OCI-LY7 (cell line): ENCODE measurements at regions of chr3 and their contacts with region 1.

Region 1: DNA sequence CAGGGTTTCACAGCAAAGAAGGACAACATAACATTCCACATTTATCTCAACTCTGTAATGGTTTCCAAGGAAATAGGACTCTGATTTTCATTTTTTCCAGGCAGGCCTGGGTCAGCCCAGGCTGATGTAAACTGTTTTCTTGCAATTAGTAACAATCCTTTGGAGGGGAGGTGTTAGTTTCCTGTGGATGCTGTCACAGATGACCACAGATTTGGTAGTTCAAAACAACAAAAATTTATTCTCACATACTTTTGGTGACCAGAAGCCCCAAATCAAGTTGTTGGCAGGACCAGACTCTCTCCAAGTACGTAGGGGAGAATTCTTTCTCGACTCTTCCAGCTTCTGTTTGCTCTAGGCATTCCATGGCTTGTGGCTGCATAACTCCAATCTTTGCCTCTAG is 88.0 kb downstream of the EDEM1 start:
- DNase-seq: no peak
- H3K4me3 ChIP-seq: no peak overlapping the region
- H3K27ac ChIP-seq: no peak overlapping the region
- H3K4me1 ChIP-seq: no peaks in the 10 kb centered on the region
- CTCF ChIP-seq: no peak

Region 2: DNA sequence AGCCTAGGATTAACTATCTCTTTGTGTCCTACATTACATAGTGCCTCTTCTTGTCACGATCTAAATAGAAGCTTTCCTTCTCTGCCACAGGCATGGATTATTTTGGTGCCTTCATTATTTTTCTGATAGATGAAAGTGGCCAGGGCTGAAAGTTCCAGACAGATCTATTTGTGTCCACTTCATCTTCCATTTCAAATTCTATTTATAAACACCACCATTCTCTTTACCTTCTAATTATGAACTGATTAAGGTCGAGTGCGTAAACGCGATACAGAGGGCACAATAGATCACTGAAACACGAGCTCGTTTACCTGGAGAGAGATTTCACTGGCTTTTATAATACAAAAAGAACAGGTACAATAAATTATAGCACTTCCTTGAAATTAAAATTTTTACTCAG is 17.0 kb after region 1 on chr3:
- CTCF ChIA-PET with region 1: interaction called, 4 read pairs
- POLR2A ChIA-PET with region 1: interaction called, 12 read pairs
- intact Hi-C with region 1: no loop called
- DNase-seq: no peak
- H3K4me3 ChIP-seq: no peak overlapping the region
- H3K27ac ChIP-seq: no peak overlapping the region
- H3K4me1 ChIP-seq: no peaks in the 10 kb centered on the region
- CTCF ChIP-seq: no peak

Region 3: DNA sequence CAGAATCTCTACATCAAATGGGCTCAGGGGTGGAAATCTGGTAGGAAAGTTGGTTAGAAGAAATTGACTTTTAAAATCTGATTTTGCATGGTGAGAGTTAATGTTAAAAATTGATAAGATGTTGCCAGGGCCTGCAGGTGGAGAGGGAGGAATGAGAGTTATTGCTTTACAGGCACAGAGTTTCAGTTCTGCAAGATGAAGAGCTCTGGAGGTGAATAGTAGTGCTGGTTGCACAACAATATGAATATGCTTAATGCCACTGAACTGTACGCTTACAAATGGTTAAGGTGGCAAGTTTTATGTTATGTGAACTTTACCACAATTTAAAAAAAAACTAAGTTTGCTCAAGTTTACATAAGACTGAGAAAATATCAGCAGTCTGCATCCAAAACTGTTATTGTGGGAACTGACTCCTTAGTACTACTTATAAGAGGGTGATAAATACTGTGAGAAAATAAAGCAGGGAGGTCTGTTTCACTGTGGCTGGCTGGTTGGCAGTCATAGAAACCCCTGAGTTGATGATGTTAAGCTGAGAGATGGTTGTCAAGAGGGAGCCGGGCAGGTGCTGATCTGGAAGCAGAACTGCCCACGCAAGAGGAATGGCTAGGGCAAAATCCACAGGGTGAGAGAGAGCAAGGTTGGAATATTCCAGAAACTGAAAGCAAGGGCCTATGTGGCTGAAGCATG is 56.9 kb after region 1 on chr3:
- CTCF ChIA-PET with region 1: no interaction called
- POLR2A ChIA-PET with region 1: no interaction called
- intact Hi-C with region 1: no loop called
- DNase-seq: peak; percentile 2
- H3K4me3 ChIP-seq: no peak overlapping the region
- H3K27ac ChIP-seq: no peak overlapping the region
- H3K4me1 ChIP-seq: no peaks in the 10 kb centered on the region
- CTCF ChIP-seq: no peak